CD14-positive monocyte (primary cell): ENCODE measurements at regions of chr4 and their contacts with region 1.

Region 1: DNA sequence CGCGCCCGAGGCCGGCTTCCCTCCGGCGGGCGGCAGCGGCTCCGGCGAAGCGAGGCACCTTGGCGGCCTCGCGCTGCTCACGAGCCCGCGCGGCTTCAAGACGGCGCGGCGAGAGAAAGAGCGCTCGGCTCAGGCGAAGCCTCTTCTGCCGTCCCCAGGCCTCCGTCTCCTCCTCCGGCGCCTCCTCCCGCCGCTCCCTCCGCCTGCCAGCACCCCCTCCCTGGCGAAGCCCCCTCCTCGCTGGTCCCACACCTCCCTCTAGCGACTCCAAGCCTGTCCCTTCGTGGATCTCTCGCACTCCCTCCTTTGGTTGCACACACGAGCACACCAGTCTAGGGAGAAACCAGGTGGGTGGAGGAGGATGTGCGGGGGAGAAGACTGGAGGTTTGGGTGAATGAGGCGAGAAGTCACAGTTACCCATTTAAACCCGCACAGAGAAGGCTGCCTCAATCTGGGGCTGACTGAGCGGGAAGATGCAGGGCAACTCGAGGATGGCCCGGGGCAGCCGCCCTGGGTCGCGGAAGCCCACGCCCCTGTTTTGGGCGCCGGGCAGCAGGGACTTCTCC is at the start of gene CAMK2D:
- DNase-seq: peak; percentile 34 to 65 (median 40)
- H3K4me3 ChIP-seq: peak within 1 kb of the TSS; percentile 62 to 90 (median 64)
- H3K4me3 Mint-ChIP-seq: peak within 1 kb of the TSS; percentile 96 to 98
- H3K27ac ChIP-seq: peak within 1 kb of the TSS; percentile 97 to 98
- H3K27ac Mint-ChIP-seq: peak within 1 kb of the TSS; percentile 94 to 99 (median 99)
- H3K4me1 ChIP-seq: peaks cover 19 to 35% of the 10 kb centered on the region in 2 donors
- H3K4me1 Mint-ChIP-seq: peaks cover 28% of the 10 kb centered on the region
- H3K27me3 ChIP-seq: peaks cover 5 to 12% of the 10 kb centered on the region in 2 donors
- H3K27me3 Mint-ChIP-seq: peaks cover 8 to 20% (median 10%) of the 10 kb centered on the region in 3 donors
- CTCF ChIP-seq: no peak
- polyA plus RNA-seq, gene CAMK2D: 10.4 to 30.6 (median 19.6) TPM

Region 2: DNA sequence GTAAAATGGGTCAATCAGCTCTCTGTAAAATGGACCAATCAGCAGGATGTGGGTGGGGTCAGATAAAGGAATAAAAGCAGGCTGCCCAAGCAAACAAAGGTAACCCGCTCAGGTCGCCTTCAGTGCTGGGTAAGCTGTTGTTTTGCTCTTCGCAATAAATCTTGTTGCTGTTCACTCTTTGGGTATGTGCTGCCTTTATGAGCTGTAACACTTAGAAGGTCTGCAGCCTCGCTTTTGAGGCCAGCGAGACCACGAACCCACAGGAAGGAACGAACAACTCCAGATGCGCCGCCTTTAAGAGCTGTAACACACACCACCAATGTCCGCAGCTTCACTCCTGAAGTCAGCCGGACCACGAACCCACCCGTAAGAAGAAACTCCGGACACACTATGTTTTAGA is 11.3 kb after region 1 on chr4:
- intact Hi-C with region 1: no loop called
- DNase-seq: no peak
- H3K4me3 ChIP-seq: peak overlapping the region in 2 of 3 experiments; percentile 17 to 45
- H3K4me3 Mint-ChIP-seq: peak overlapping the region; percentile 35 to 83
- H3K27ac ChIP-seq: no peak overlapping the region
- H3K27ac Mint-ChIP-seq: peak overlapping the region in 3 of 7 donors; percentile 0 to 68 (median 35)
- H3K4me1 ChIP-seq: peaks cover 5 to 6% of the 10 kb centered on the region in 2 donors
- H3K4me1 Mint-ChIP-seq: peaks cover 5% of the 10 kb centered on the region
- H3K27me3 ChIP-seq: peaks cover 0 to 2% of the 10 kb centered on the region in 2 donors
- H3K27me3 Mint-ChIP-seq: peaks cover 2 to 3% (median 2%) of the 10 kb centered on the region in 3 donors
- CTCF ChIP-seq: no peak

Region 3: GRCh38 chr4:113809311-113809710 is 47.6 kb after region 1 on chr4:
- intact Hi-C with region 1: loop called (anchors 5 to 10 kb)
- DNase-seq: peak; percentile 89 to 99 (median 91)
- H3K4me3 ChIP-seq: no peak overlapping the region
- H3K4me3 Mint-ChIP-seq: peak overlapping the region in 1 of 2 donors; percentile 23
- H3K27ac ChIP-seq: peak overlapping the region; percentile 38 to 80
- H3K27ac Mint-ChIP-seq: peak overlapping the region; percentile 84 to 95 (median 92)
- H3K4me1 ChIP-seq: peaks cover 35 to 47% of the 10 kb centered on the region in 2 donors
- H3K4me1 Mint-ChIP-seq: peaks cover 33% of the 10 kb centered on the region
- H3K27me3 ChIP-seq: no peaks in the 10 kb centered on the region
- H3K27me3 Mint-ChIP-seq: no peaks in the 10 kb centered on the region
- CTCF ChIP-seq: no peak

Region 4: GRCh38 chr4:113837397-113837796 is 75.7 kb after region 1 on chr4:
- intact Hi-C with region 1: loop called in 1 of 2 experiments (anchors 5 kb)
- DNase-seq: peak; percentile 82 to 94 (median 88)
- H3K4me3 ChIP-seq: peak overlapping the region in 1 of 3 experiments; percentile 54
- H3K4me3 Mint-ChIP-seq: peak overlapping the region in 1 of 2 donors; percentile 26
- H3K27ac ChIP-seq: peak overlapping the region in 1 of 2 donors; percentile 80
- H3K27ac Mint-ChIP-seq: peak overlapping the region; percentile 84 to 92 (median 87)
- H3K4me1 ChIP-seq: peaks cover 29 to 30% of the 10 kb centered on the region in 2 donors
- H3K4me1 Mint-ChIP-seq: peaks cover 40% of the 10 kb centered on the region
- H3K27me3 ChIP-seq: no peaks in the 10 kb centered on the region
- H3K27me3 Mint-ChIP-seq: peaks cover 0 to 2% (median 1%) of the 10 kb centered on the region in 3 donors
- CTCF ChIP-seq: no peak